A673 (cell line): ENCODE measurements at regions of chrX and their contacts with region 1.

Region 1: DNA sequence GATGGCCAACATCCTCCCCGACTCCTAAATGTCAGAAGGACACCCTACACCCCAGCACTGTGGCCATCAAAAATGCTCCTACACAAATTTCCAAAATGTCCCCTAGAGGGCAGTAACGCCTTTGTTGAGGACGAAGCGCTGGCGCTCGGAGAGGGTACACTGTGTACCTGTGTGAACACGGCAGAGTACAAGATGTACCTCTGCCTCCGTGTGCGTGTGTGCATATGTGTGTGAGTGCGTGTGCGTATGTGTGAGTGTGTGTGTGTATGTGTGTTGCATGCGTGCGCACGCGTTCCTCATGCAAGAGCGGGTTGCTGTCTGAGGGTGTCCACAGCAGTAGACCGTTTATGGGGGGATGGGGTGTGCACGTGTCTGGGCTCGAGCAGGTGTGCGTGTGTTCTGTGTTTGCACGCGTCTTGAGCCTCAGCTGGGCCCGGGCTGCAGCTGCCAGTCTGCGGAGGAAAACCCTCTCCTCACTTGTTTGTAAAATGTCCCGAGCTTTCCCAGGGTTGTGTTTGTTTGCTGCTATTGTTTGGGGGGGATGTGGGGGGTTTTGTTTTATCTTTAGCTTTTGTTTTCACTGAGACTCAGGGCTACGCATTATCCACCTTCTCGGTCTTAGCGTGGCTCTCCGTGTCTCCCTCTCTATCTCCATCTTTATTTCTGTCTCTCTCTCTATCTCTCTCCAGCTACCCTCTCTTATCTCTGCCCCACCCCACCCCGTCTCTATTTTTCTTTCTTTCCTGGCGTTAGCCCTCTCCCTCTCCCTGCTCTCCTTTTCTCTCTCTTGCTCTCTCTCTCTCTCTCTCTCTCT is 10.4 kb upstream of the TSPYL2 start:
- DNase-seq: peak; percentile 81
- H3K4me3 ChIP-seq: peak overlapping the region; percentile 54
- H3K27ac ChIP-seq: no peak overlapping the region
- H3K4me1 ChIP-seq: no peaks in the 10 kb centered on the region
- H3K27me3 ChIP-seq: no peaks in the 10 kb centered on the region
- CTCF ChIP-seq: peak; percentile 79

Region 2: DNA sequence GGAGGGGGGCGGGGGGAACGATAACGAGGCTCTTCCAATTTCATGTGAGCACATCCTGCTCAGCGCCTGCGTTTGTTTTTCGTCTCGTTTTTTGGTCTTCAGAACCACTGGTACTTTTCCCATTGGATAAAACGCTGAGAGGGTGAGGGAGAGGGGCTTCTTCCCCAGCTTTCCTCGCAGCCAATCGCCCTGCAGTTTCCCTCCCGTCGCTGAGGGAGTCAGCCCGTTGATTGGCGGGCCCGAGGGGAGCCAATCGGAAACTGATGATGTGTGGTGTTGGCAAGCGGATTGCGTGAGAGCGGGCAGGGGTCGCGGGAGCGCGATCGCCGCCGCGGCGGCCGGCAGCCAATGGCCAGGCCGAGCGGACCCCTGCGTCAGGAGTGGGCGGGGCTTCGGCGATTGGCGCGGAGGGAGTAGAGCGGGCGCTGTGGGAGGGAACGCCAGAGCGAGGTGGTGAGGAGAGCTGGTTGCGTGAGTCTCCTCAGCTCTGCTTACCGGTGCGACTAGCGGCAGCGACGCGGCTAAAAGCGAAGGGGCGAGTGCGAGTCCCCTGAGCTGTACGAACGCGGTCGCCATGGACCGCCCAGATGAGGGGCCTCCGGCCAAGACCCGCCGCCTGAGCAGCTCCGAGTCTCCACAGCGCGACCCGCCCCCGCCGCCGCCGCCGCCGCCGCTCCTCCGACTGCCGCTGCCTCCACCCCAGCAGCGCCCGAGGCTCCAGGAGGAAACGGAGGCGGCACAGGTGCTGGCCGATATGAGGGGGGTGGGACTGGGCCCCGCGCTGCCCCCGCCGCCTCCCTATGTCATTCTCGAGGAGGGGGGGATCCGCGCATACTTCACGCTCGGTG is 10.3 kb after region 1 on chrX and contains the start of gene TSPYL2:
- CTCF ChIA-PET with region 1: interaction called, 3 read pairs
- POLR2A ChIA-PET with region 1: interaction called, 11 read pairs
- intact Hi-C with region 1: no loop called
- DNase-seq: peak; percentile 96
- H3K4me3 ChIP-seq: peak within 1 kb of the TSS; percentile 73
- H3K27ac ChIP-seq: peak within 1 kb of the TSS; percentile 80
- H3K4me1 ChIP-seq: peaks cover 6% of the 10 kb centered on the region
- H3K27me3 ChIP-seq: no peaks in the 10 kb centered on the region
- CTCF ChIP-seq: no peak
- total RNA-seq, gene TSPYL2: 25.0 and 30.0 TPM in 2 replicates